ENCODE measurements at regions of chr14 and their contacts with region 1.

Region 1: GRCh38 chr14:68248481-68249255 is 429.1 kb downstream of the RAD51B start:
- DNase-seq: no peak

Region 2: GRCh38 chr14:67943947-67944346 is 304.7 kb before region 1 on chr14:
- intact Hi-C with region 1: loop called (anchors 5 to 10 kb)
- DNase-seq: no peak

Region 3: DNA sequence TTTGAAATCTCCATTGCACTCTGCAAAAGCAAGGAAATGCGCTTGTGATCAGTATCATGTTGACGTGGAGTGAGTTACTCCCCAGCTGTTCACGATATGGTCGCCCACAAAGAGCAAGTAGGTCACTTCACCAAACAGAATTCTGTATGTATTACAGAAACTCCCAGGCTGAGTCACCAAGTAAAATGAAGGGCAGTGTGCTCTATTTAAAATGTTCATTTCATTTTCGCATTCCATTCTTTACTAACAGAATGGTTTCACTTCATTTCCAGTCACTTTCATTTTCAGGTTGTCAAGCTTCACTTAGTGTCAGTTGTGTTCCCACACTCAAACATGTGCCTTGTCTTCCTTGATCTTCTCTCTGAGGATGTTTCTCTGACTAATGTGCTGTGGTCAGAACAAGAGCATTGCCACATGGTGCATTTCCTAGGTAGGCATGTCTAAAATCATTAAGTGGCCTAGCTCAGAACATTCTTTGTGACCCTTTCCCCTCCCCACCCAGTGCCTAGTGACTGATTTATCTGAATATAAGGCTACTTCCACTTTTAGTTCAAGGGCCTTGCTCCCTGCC is 37.9 kb before region 1 on chr14:
- intact Hi-C with region 1: no loop called
- DNase-seq: no peak

Region 4: GRCh38 chr14:68795597-68796417 is 547.1 kb after region 1 on chr14:
- intact Hi-C with region 1: loop called in 1 of 2 experiments (anchors 5 kb)
- DNase-seq: peak; percentile 95